Testis (tissue), 5 donors: ENCODE measurements at regions of chr7 and their contacts with region 1.

Region 1: GRCh38 chr7:131546583-131547111 is 9.8 kb downstream of the PODXL start:
- DNase-seq: peak; percentile 58
- H3K4me3 ChIP-seq: no peak overlapping the region
- H3K27ac ChIP-seq: no peak overlapping the region
- H3K4me1 ChIP-seq: no peaks in the 10 kb centered on the region
- H3K27me3 ChIP-seq: no peaks in the 10 kb centered on the region
- CTCF ChIP-seq: peak; percentile 20 to 59 (median 55)
- POLR2A ChIP-seq: no peak

Region 2: GRCh38 chr7:131654668-131655326 is 108.2 kb after region 1 on chr7:
- intact Hi-C with region 1: loop called (anchors 10 kb)
- DNase-seq: peak; percentile 93
- H3K4me3 ChIP-seq: no peak overlapping the region
- H3K27ac ChIP-seq: no peak overlapping the region
- H3K4me1 ChIP-seq: no peaks in the 10 kb centered on the region
- H3K27me3 ChIP-seq: no peaks in the 10 kb centered on the region
- CTCF ChIP-seq: peak; percentile 94 to 96 (median 95)
- POLR2A ChIP-seq: no peak

Region 3: DNA sequence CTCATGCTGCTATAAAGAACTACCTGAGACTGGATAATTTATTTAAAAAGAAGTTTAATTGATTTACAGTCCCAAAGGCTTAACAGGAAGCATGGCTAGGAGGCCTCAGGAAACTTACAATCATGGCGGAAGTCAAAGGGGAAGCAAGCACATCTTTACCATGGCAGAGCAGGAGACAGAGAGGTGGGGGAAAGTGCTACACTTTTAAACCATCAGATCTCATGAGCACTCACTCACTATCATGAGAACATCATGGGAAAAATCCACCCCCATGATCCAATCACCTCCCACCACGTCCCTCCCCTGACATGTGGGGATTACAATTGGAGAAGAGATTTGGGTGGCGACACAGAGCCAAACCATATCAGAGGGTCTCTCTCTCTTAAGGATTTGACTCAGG is 118.4 kb after region 1 on chr7:
- intact Hi-C with region 1: no loop called
- DNase-seq: no peak
- H3K4me3 ChIP-seq: no peak overlapping the region
- H3K27ac ChIP-seq: no peak overlapping the region
- H3K4me1 ChIP-seq: no peaks in the 10 kb centered on the region
- H3K27me3 ChIP-seq: no peaks in the 10 kb centered on the region
- CTCF ChIP-seq: no peak
- POLR2A ChIP-seq: no peak

Region 4: GRCh38 chr7:131919920-131920709 is 373.5 kb after region 1 on chr7:
- intact Hi-C with region 1: no loop called
- DNase-seq: no peak
- H3K4me3 ChIP-seq: no peak overlapping the region
- H3K27ac ChIP-seq: no peak overlapping the region
- H3K4me1 ChIP-seq: no peaks in the 10 kb centered on the region
- H3K27me3 ChIP-seq: no peaks in the 10 kb centered on the region
- CTCF ChIP-seq: no peak
- POLR2A ChIP-seq: no peak